ENCODE measurements at regions of chr11 and their contacts with region 1.

Region 1: DNA sequence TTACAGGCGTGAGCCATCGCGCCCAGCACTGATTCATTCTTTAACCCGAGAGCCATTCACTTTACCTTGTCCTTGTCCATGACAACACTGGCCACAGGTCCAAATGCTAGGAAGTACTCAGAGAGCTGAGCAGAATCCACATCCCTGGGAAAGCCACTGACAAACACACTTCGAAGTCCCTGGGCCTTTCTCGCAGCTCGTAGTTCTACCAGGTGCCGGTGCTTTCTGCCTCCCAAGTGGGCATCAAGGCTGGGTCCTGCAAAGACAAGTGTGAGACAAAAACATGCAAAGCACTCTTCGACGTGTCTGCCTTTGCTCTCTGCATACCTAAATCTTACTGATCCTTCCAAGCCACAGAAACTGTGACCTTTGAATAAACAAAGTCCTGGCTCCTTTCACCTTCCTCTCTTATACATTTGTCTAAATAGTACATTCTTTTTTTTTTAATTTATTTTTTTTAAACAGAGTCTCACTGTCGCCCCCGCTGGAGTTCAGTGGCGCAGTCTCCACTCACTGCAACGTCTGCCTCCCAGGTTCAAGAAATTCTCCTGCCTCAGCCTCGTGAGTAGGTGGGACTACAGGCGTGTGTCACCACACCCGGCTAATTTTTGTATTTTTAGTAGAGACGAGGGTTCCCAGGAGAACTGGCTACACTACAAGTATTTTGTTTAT is 2.2 kb downstream of the TUT1 start:
- DNase-seq: no peak
- ATAC-seq: no peak
- H3K4me3 ChIP-seq: no peak overlapping the region
- H3K27ac ChIP-seq: no peak overlapping the region
- H3K4me1 ChIP-seq: peaks cover 29% of the 10 kb centered on the region
- H3K27me3 ChIP-seq: no peaks in the 10 kb centered on the region
- CTCF ChIP-seq: peak; percentile 17

Region 2: GRCh38 chr11:61509043-61510029 is 1079.8 kb before region 1 on chr11:
- intact Hi-C with region 1: loop called (anchors 10 kb)
- DNase-seq: peak; percentile 86
- ATAC-seq: peak; percentile 89
- H3K4me3 ChIP-seq: peak overlapping the region; percentile 28
- H3K27ac ChIP-seq: no peak overlapping the region
- H3K4me1 ChIP-seq: peaks cover 18% of the 10 kb centered on the region
- H3K27me3 ChIP-seq: peaks cover 48% of the 10 kb centered on the region
- CTCF ChIP-seq: peak; percentile 60

Measured in upper lobe of right lung (tissue), 1 donor.